ENCODE measurements at regions of chr7 and their contacts with region 1.

Region 1: DNA sequence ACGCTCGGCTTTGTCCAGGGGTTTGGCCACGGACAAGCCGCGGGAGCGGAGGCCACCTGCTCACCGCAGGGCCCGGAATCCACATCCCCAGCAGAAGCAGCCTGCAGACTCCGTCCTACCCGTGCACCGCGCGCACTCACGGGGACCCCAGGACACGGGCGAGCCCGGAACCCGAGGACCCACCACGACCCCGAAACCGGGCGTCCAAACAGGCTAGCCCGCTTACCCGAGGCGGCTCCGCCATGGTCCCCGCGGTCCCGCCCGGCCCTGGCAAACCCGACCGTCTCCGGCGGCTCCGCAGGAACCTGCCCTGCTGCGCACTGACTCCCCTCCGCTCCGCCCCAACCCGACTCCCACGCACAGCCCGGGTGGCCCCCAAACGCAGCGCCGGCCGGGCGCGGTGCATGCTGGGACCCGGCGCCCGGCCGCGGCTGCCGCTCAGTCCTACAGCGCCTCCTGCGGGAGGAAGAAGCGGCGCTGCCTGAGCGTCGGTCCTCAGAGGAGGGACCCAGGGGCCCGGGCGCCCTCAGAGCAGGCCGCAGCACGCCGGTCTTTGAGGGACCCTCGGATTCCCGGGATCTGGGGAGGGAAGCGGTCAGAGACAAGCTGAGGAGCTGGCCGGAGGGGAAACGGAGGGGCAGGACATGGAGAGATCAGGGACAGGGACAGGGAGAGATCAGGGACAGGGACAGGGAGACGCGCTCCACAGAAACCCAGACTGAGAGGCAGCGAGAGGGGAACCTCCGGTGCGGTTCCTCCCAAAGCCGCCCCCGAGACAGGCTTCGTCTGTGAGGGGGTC is at the start of gene ZNF786:
- DNase-seq: peak; percentile 88 to 97
- ATAC-seq: peak; percentile 83 to 96 (median 85)
- H3K4me3 ChIP-seq: peak within 1 kb of the TSS; percentile 98
- H3K4me3 Mint-ChIP-seq: peak within 1 kb of the TSS; percentile 99
- H3K27ac ChIP-seq: peak within 1 kb of the TSS; percentile 81
- H3K27ac Mint-ChIP-seq: peak within 1 kb of the TSS; percentile 95 to 97
- H3K4me1 ChIP-seq: peaks cover 37% of the 10 kb centered on the region
- H3K4me1 Mint-ChIP-seq: peaks cover 39 to 47% of the 10 kb centered on the region in 2 donors
- H3K27me3 ChIP-seq: no peaks in the 10 kb centered on the region
- H3K27me3 Mint-ChIP-seq: no peaks in the 10 kb centered on the region
- CTCF ChIP-seq: peak; percentile 90
- total RNA-seq, gene ZNF786: 3.2 to 9.1 (median 4.6) TPM

Region 2: GRCh38 chr7:148262721-148263229 is 827.8 kb before region 1 on chr7:
- intact Hi-C with region 1: no loop called
- DNase-seq: peak; percentile 49 to 71
- ATAC-seq: peak; percentile 64 to 91 (median 69)
- H3K4me3 ChIP-seq: no peak overlapping the region
- H3K4me3 Mint-ChIP-seq: no peak overlapping the region
- H3K27ac ChIP-seq: no peak overlapping the region
- H3K27ac Mint-ChIP-seq: no peak overlapping the region
- H3K4me1 ChIP-seq: peaks cover 7% of the 10 kb centered on the region
- H3K4me1 Mint-ChIP-seq: peaks cover 11% of the 10 kb centered on the region in 2 donors
- H3K27me3 ChIP-seq: peaks cover 3% of the 10 kb centered on the region
- H3K27me3 Mint-ChIP-seq: peaks cover 9 to 17% of the 10 kb centered on the region in 2 donors
- CTCF ChIP-seq: peak; percentile 86

Region 3: GRCh38 chr7:148884299-148885022 is 206.1 kb before region 1 on chr7:
- intact Hi-C with region 1: loop called (anchors 10 kb)
- DNase-seq: peak; percentile 95 to 96
- ATAC-seq: peak; percentile 85 to 96 (median 88)
- H3K4me3 ChIP-seq: peak overlapping the region; percentile 50
- H3K4me3 Mint-ChIP-seq: peak overlapping the region; percentile 93
- H3K27ac ChIP-seq: peak overlapping the region; percentile 83
- H3K27ac Mint-ChIP-seq: peak overlapping the region; percentile 96 to 97
- H3K4me1 ChIP-seq: peaks cover 8% of the 10 kb centered on the region
- H3K4me1 Mint-ChIP-seq: peaks cover 14 to 15% of the 10 kb centered on the region in 2 donors
- H3K27me3 ChIP-seq: no peaks in the 10 kb centered on the region
- H3K27me3 Mint-ChIP-seq: no peaks in the 10 kb centered on the region
- CTCF ChIP-seq: no peak

Region 4: GRCh38 chr7:149005241-149006050 is 85.2 kb before region 1 on chr7:
- intact Hi-C with region 1: loop called (anchors 1 kb)
- DNase-seq: peak; percentile 80 to 92
- ATAC-seq: peak; percentile 84 to 99 (median 97)
- H3K4me3 ChIP-seq: no peak overlapping the region
- H3K4me3 Mint-ChIP-seq: no peak overlapping the region
- H3K27ac ChIP-seq: no peak overlapping the region
- H3K27ac Mint-ChIP-seq: peak overlapping the region in 1 of 2 donors; percentile 75
- H3K4me1 ChIP-seq: peaks cover 8% of the 10 kb centered on the region
- H3K4me1 Mint-ChIP-seq: peaks cover 4 to 6% of the 10 kb centered on the region in 2 donors
- H3K27me3 ChIP-seq: no peaks in the 10 kb centered on the region
- H3K27me3 Mint-ChIP-seq: no peaks in the 10 kb centered on the region
- CTCF ChIP-seq: peak; percentile 93

Region 5: DNA sequence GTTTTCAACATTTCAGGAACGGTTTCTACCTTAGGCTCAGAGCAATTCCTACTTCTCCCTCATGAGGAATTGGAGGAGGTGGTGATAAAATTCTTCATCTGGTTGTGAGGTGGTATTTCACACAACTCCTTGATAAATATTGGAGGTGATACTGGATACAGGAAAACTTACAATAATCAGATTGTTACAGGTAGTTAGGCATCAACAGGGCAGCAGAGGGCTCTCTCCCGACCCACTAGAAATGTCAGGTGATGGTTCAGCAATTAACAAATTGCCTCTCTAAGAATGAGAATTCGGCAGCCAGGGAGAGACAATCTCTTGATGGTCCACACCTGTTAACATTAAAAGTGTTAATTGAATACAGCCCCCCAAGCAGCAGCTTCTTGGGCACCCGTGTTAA is 22.7 kb before region 1 on chr7:
- intact Hi-C with region 1: loop called (anchors 2 kb)
- DNase-seq: peak in 1 of 2 donors; percentile 28
- ATAC-seq: no peak
- H3K4me3 ChIP-seq: no peak overlapping the region
- H3K4me3 Mint-ChIP-seq: peak overlapping the region; percentile 47
- H3K27ac ChIP-seq: no peak overlapping the region
- H3K27ac Mint-ChIP-seq: no peak overlapping the region
- H3K4me1 ChIP-seq: peaks cover 21% of the 10 kb centered on the region
- H3K4me1 Mint-ChIP-seq: peaks cover 8 to 9% of the 10 kb centered on the region in 2 donors
- H3K27me3 ChIP-seq: no peaks in the 10 kb centered on the region
- H3K27me3 Mint-ChIP-seq: no peaks in the 10 kb centered on the region
- CTCF ChIP-seq: no peak

Region 6: GRCh38 chr7:149147072-149147751 is 56.6 kb after region 1 on chr7 and contains the start of gene ZNF398:
- intact Hi-C with region 1: loop called (anchors 2 kb)
- DNase-seq: peak; percentile 83 to 93
- ATAC-seq: peak; percentile 81 to 94 (median 84)
- H3K4me3 ChIP-seq: peak within 1 kb of the TSS; percentile 70
- H3K4me3 Mint-ChIP-seq: peak within 1 kb of the TSS; percentile 86
- H3K27ac ChIP-seq: peak within 1 kb of the TSS; percentile 67
- H3K27ac Mint-ChIP-seq: peak within 1 kb of the TSS; percentile 84 to 89
- H3K4me1 ChIP-seq: peaks cover 26% of the 10 kb centered on the region
- H3K4me1 Mint-ChIP-seq: peaks cover 18 to 25% of the 10 kb centered on the region in 2 donors
- H3K27me3 ChIP-seq: no peaks in the 10 kb centered on the region
- H3K27me3 Mint-ChIP-seq: no peaks in the 10 kb centered on the region
- CTCF ChIP-seq: peak; percentile 69
- total RNA-seq, gene ZNF398: 14.8 to 18.5 (median 18.5) TPM

Region 7: DNA sequence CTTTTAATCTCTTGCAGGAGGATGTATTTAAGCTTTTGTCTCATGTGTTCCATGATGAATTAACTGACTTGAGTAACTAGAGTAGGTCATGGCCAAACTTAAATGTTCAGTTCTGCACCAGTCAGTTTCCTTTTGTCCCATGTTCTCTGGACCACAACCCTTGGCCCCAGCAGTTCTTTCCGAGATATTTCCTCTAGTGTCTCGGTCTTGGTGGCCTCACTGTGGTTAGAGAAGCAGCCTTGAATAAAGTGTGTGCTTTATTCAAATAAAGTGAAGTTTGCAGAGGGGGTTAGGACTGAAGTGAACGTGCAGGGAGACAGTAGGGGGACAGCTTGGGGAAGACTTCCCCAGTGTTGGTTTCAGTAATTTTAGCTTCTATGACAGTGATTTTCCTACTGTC is 158.2 kb after region 1 on chr7:
- intact Hi-C with region 1: no loop called
- DNase-seq: no peak
- ATAC-seq: no peak
- H3K4me3 ChIP-seq: no peak overlapping the region
- H3K4me3 Mint-ChIP-seq: no peak overlapping the region
- H3K27ac ChIP-seq: no peak overlapping the region
- H3K27ac Mint-ChIP-seq: no peak overlapping the region
- H3K4me1 ChIP-seq: no peaks in the 10 kb centered on the region
- H3K4me1 Mint-ChIP-seq: peaks cover 13 to 24% of the 10 kb centered on the region in 2 donors
- H3K27me3 ChIP-seq: no peaks in the 10 kb centered on the region
- H3K27me3 Mint-ChIP-seq: no peaks in the 10 kb centered on the region
- CTCF ChIP-seq: no peak